ENCODE measurements at regions of chr6 and their contacts with region 1.

Region 1: GRCh38 chr6:133707456-133707855 is 181.5 kb upstream of the TCF21 start:
- DNase-seq: no peak
- ATAC-seq: no peak
- H3K4me3 ChIP-seq: no peak overlapping the region
- H3K27ac ChIP-seq: no peak overlapping the region
- H3K4me1 ChIP-seq: no peaks in the 10 kb centered on the region
- H3K27me3 ChIP-seq: no peaks in the 10 kb centered on the region
- CTCF ChIP-seq: no peak

Region 2: DNA sequence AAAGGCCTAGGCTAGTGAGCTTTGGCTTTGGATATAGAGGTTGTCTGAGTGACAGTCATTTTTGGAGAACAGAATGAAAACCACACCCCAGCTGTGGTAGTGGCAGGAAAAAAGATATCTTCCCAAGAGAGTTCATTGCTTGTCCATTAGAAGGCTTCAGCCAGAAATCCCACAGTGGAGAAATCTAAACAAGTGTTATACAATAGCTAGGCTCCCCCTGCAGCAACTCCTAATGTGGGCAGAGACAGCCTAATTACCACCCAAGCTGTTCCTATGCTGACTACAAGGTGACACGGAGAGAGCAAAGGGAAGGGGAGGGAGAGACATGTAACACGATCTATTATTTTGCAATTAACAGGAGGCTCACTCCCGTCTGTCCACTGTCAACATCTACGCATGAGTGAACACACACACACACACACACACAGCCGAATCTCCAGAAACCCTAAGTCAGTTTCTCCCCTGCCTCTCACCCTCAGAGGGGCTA is 34.0 kb after region 1 on chr6:
- intact Hi-C with region 1: loop called in 1 of 2 experiments (anchors 2 kb)
- DNase-seq: no peak
- ATAC-seq: peak; percentile 63 to 81 (median 76)
- H3K4me3 ChIP-seq: no peak overlapping the region
- H3K27ac ChIP-seq: no peak overlapping the region
- H3K4me1 ChIP-seq: no peaks in the 10 kb centered on the region
- H3K27me3 ChIP-seq: no peaks in the 10 kb centered on the region
- CTCF ChIP-seq: no peak